ENCODE measurements at regions of chr15 and their contacts with region 1.

Region 1: DNA sequence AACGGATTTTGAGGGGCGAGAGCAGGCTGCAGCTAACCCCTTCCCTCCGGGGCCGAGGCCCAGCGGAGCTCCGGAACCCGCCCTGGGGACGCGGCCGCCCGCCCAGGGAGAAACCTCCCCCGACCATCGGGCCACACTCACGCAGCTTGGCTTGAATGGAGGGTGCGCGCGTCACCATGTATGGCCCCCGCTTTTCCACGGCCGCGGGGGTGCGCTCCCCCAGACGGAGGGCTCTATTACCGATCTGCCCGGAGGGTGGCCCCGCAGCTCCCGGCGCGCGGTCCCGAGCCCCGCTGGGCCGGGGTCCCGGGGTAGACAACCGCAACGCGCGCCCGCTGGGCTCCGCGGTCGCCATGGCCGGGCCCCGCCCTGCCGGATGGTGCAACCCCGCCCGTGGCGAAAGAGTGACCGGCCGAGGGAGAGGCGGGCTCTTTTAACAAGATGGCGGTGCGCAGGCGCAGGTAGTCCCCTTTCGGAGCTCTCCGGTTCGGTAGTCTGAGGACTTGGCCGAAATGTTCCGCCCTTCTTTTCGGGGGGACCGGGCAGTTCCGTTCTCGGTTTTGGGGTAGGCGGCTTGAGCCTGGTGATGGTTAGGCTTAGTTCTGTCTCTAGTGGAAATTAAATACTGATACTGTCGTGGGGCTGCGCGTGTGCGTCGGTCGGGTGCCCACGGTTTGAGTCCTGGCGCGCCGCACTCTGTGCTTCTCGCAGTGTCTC is at the start of gene FAM219B:
- DNase-seq: peak; percentile 68 to 83 (median 71)
- H3K4me3 ChIP-seq: peak within 1 kb of the TSS; percentile 93
- H3K4me3 Mint-ChIP-seq: peak within 1 kb of the TSS; percentile 92 to 99 (median 99)
- H3K27ac ChIP-seq: peak within 1 kb of the TSS; percentile 80
- H3K27ac Mint-ChIP-seq: peak within 1 kb of the TSS; percentile 94 to 99 (median 98)
- H3K4me1 ChIP-seq: peaks cover 32% of the 10 kb centered on the region
- H3K4me1 Mint-ChIP-seq: peaks cover 38 to 42% (median 41%) of the 10 kb centered on the region in 3 donors
- H3K27me3 ChIP-seq: no peaks in the 10 kb centered on the region
- H3K27me3 Mint-ChIP-seq: no peaks in the 10 kb centered on the region
- total RNA-seq, gene FAM219B: 45.0 to 47.7 TPM

Region 2: DNA sequence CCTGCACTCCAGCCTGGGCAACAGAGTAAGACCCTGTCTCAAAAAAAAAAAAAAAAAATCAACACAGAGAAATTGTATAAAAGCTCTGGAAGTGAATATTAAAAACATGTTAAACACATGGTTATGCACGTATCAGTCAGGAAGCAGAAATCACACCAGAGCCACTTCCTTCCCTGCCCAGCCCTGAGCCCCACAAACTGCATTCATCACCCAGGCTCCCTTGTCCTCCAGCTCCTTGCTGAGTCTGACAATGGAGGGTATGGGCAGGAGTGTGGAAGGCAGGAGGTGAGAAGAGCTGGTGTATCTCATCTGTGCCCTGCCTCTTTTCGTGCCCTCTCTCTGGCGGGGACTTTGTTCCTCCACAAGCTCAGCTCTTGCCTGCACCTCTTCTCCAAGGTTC is 992.5 kb before region 1 on chr15:
- CTCF ChIA-PET with region 1: no interaction called
- POLR2A ChIA-PET with region 1: no interaction called
- DNase-seq: no peak
- H3K4me3 ChIP-seq: no peak overlapping the region
- H3K4me3 Mint-ChIP-seq: peak overlapping the region in 3 of 7 donors; percentile 24 to 36 (median 32)
- H3K27ac ChIP-seq: no peak overlapping the region
- H3K27ac Mint-ChIP-seq: peak overlapping the region in 5 of 8 donors; percentile 8 to 69 (median 29)
- H3K4me1 ChIP-seq: peaks cover 7% of the 10 kb centered on the region
- H3K4me1 Mint-ChIP-seq: peaks cover 13 to 21% (median 15%) of the 10 kb centered on the region in 3 donors
- H3K27me3 ChIP-seq: no peaks in the 10 kb centered on the region
- H3K27me3 Mint-ChIP-seq: no peaks in the 10 kb centered on the region

Region 3: GRCh38 chr15:74635228-74635627 is 271.4 kb before region 1 on chr15:
- CTCF ChIA-PET with region 1: interaction called, 19 read pairs
- POLR2A ChIA-PET with region 1: no interaction called
- DNase-seq: peak; percentile 48 to 81 (median 56)
- H3K4me3 ChIP-seq: no peak overlapping the region
- H3K4me3 Mint-ChIP-seq: no peak overlapping the region
- H3K27ac ChIP-seq: no peak overlapping the region
- H3K27ac Mint-ChIP-seq: peak overlapping the region in 6 of 8 donors; percentile 4 to 77 (median 50)
- H3K4me1 ChIP-seq: no peaks in the 10 kb centered on the region
- H3K4me1 Mint-ChIP-seq: peaks cover 0 to 2% (median 2%) of the 10 kb centered on the region in 3 donors
- H3K27me3 ChIP-seq: no peaks in the 10 kb centered on the region
- H3K27me3 Mint-ChIP-seq: no peaks in the 10 kb centered on the region

Region 4: DNA sequence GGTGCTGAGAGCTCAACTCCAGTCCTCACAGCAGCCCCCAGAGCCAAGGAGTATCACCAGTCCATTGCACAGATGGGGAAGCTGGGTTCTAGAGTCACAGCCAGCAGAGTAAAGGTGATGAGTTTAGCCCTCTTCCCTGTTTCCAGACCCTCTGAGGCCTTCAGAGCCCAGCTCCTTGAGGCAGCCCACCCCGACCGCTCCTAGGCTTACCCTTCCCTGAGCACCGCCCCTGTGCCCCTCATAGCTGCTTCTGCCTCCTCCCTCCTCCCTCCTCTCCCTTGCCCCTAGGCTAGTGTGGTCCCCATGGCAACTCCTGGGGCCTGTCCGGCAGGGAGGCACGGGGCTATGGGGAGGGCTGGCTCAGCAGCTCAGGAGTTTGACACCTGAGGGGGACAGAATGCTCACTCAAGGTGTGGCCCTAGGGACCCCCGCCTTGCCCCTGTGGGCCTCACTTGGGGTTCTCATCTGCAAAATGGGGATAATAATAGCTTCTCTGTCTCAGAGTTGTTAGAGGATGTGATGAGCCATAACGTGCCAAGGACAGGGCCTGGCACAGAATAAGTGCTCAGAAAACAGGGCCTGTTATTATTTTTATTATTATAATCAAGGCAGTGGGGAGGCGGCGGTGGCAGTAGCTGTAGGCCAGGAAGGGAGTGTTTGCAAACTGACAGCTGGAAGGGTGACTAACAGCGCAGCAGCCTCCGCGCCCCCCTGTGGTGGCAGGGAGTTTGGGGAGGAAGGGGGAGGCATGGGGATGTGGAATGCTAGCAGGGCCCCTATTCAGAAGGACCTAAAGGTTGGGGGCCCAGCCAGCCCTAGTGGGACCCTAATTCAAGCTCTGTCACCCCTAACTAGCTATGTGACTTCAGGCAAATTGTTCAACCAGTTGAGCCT is 113.2 kb before region 1 on chr15:
- CTCF ChIA-PET with region 1: interaction called, 19 read pairs
- POLR2A ChIA-PET with region 1: no interaction called
- DNase-seq: peak; percentile 71 to 85 (median 74)
- H3K4me3 ChIP-seq: peak overlapping the region; percentile 46
- H3K4me3 Mint-ChIP-seq: peak overlapping the region; percentile 66 to 91 (median 85)
- H3K27ac ChIP-seq: no peak overlapping the region
- H3K27ac Mint-ChIP-seq: peak overlapping the region; percentile 81 to 98 (median 93)
- H3K4me1 ChIP-seq: peaks cover 99% of the 10 kb centered on the region
- H3K4me1 Mint-ChIP-seq: peaks cover 84 to 93% (median 89%) of the 10 kb centered on the region in 3 donors
- H3K27me3 ChIP-seq: no peaks in the 10 kb centered on the region
- H3K27me3 Mint-ChIP-seq: no peaks in the 10 kb centered on the region

Region 5: DNA sequence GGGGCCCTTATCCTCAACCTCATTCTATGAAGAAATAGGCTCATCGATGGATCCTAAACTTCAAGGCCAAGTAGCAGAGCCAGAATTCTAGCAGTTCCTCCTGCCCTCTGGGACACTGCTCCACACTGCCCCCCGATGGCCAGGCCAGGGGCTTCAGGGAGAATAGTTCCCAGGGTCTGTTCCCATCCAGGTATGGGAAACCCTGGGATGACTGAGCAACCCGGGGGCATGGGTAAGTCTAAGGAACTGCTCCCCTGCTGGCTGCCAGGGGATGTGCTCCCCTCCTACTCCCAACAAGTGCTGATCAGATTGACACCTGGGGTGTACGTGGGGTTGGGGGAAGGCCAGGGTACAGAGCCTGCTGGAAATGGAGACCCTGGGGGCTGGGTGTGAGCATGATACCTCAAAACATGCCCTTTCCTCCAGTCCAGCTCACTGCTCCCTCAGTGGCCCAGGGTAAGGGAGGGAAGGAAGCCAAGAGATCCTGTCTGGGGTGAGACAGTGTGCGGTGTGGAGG is 71.2 kb before region 1 on chr15:
- CTCF ChIA-PET with region 1: interaction called, 16 read pairs
- POLR2A ChIA-PET with region 1: no interaction called
- DNase-seq: peak in 4 of 5 donors; percentile 16 to 63 (median 26)
- H3K4me3 ChIP-seq: no peak overlapping the region
- H3K4me3 Mint-ChIP-seq: no peak overlapping the region
- H3K27ac ChIP-seq: no peak overlapping the region
- H3K27ac Mint-ChIP-seq: peak overlapping the region in 2 of 8 donors; percentile 14 to 22
- H3K4me1 ChIP-seq: no peaks in the 10 kb centered on the region
- H3K4me1 Mint-ChIP-seq: peaks cover 0 to 4% (median 3%) of the 10 kb centered on the region in 3 donors
- H3K27me3 ChIP-seq: no peaks in the 10 kb centered on the region
- H3K27me3 Mint-ChIP-seq: peaks cover 2 to 3% of the 10 kb centered on the region in 2 donors

Region 6: GRCh38 chr15:74851960-74852359 is 54.6 kb before region 1 on chr15:
- CTCF ChIA-PET with region 1: interaction called, 11 read pairs
- POLR2A ChIA-PET with region 1: no interaction called
- DNase-seq: no peak
- H3K4me3 ChIP-seq: no peak overlapping the region
- H3K4me3 Mint-ChIP-seq: no peak overlapping the region
- H3K27ac ChIP-seq: no peak overlapping the region
- H3K27ac Mint-ChIP-seq: peak overlapping the region in 1 of 8 donors; percentile 91
- H3K4me1 ChIP-seq: peaks cover 5% of the 10 kb centered on the region
- H3K4me1 Mint-ChIP-seq: peaks cover 4 to 10% (median 9%) of the 10 kb centered on the region in 3 donors
- H3K27me3 ChIP-seq: no peaks in the 10 kb centered on the region
- H3K27me3 Mint-ChIP-seq: no peaks in the 10 kb centered on the region

Region 7: GRCh38 chr15:74873036-74873755 is 33.4 kb before region 1 on chr15 and contains the start of gene SCAMP2:
- CTCF ChIA-PET with region 1: interaction called, 33 read pairs
- POLR2A ChIA-PET with region 1: interaction called, 10 read pairs
- DNase-seq: peak; percentile 87 to 95 (median 93)
- H3K4me3 ChIP-seq: peak within 1 kb of the TSS; percentile 98
- H3K4me3 Mint-ChIP-seq: peak within 1 kb of the TSS; percentile 94 to 100 (median 97)
- H3K27ac ChIP-seq: peak within 1 kb of the TSS; percentile 96
- H3K27ac Mint-ChIP-seq: peak within 1 kb of the TSS; percentile 95 to 100 (median 96)
- H3K4me1 ChIP-seq: peaks cover 40% of the 10 kb centered on the region
- H3K4me1 Mint-ChIP-seq: peaks cover 43 to 54% (median 50%) of the 10 kb centered on the region in 3 donors
- H3K27me3 ChIP-seq: no peaks in the 10 kb centered on the region
- H3K27me3 Mint-ChIP-seq: no peaks in the 10 kb centered on the region
- total RNA-seq, gene SCAMP2: 82.8 to 84.2 TPM

Region 8: DNA sequence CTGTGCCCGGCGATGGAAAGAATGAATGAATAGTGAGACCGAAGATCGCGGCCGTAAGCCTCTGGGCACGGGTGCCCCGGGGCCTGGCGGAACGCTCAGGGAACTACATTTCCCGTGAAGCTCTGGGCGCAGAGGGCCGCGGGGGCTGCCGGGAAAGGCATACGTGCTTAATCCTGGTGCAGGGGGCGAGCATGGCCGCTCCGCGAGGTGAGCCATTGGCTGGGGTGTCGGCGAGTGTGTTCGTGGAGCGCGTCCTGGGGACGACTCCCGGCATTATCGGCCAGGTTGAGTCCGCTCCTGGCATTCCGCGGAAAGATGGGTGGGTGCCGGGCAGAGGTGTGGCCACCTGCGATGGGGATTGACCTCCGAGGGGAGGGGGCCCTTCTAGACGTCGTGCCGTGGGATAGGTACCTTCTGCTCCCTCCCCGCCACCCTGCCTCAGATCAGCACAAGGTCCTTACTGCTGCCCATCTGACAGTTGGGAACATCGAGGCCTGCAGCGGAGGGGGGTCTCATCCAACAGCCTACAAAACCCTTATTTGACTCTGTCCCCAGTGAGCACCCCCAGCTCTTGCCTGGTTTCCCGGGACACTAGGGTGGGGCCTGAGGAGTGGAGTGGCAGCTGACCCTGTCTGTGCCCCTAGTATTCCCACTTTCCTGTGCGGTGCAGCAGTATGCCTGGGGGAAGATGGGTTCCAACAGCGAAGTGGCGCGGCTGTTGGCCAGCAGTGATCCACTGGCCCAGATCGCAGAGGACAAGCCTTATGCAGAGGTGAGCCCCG is 16.5 kb before region 1 on chr15 and contains the start of gene MPI:
- CTCF ChIA-PET with region 1: interaction called, 16 read pairs
- POLR2A ChIA-PET with region 1: interaction called, 12 read pairs
- DNase-seq: peak; percentile 75 to 89 (median 82)
- H3K4me3 ChIP-seq: peak within 1 kb of the TSS; percentile 89
- H3K4me3 Mint-ChIP-seq: peak within 1 kb of the TSS; percentile 85 to 97 (median 94)
- H3K27ac ChIP-seq: peak within 1 kb of the TSS; percentile 82
- H3K27ac Mint-ChIP-seq: peak within 1 kb of the TSS; percentile 90 to 99 (median 96)
- H3K4me1 ChIP-seq: peaks cover 46% of the 10 kb centered on the region
- H3K4me1 Mint-ChIP-seq: peaks cover 36 to 54% (median 46%) of the 10 kb centered on the region in 3 donors
- H3K27me3 ChIP-seq: no peaks in the 10 kb centered on the region
- H3K27me3 Mint-ChIP-seq: no peaks in the 10 kb centered on the region
- total RNA-seq, gene MPI: 40.4 to 43.0 TPM